ENCODE measurements at regions of chr2 and their contacts with region 1.

Region 1: GRCh38 chr2:119826370-119826961 is 66.7 kb downstream of the PTPN4 start:
- DNase-seq: peak; percentile 51
- H3K4me3 Mint-ChIP-seq: no peak overlapping the region
- H3K27ac Mint-ChIP-seq: no peak overlapping the region
- H3K4me1 Mint-ChIP-seq: peaks cover 18% of the 10 kb centered on the region
- H3K27me3 Mint-ChIP-seq: no peaks in the 10 kb centered on the region
- CTCF ChIP-seq: peak; percentile 50

Region 2: GRCh38 chr2:119753041-119753929 is 73.2 kb before region 1 on chr2:
- CTCF ChIA-PET with region 1: interaction called, 37 read pairs
- POLR2A ChIA-PET with region 1: interaction called, 8 read pairs
- intact Hi-C with region 1: loop called (anchors 1 kb)
- DNase-seq: peak; percentile 61
- H3K4me3 Mint-ChIP-seq: no peak overlapping the region
- H3K27ac Mint-ChIP-seq: no peak overlapping the region
- H3K4me1 Mint-ChIP-seq: peaks cover 56% of the 10 kb centered on the region
- H3K27me3 Mint-ChIP-seq: no peaks in the 10 kb centered on the region
- CTCF ChIP-seq: peak; percentile 47

Region 3: GRCh38 chr2:119838179-119838578 is 11.7 kb after region 1 on chr2:
- CTCF ChIA-PET with region 1: interaction called, 7 read pairs
- POLR2A ChIA-PET with region 1: interaction called, 10 read pairs
- intact Hi-C with region 1: no loop called
- DNase-seq: peak; percentile 38
- H3K4me3 Mint-ChIP-seq: peak overlapping the region; percentile 66
- H3K27ac Mint-ChIP-seq: peak overlapping the region; percentile 90
- H3K4me1 Mint-ChIP-seq: peaks cover 26% of the 10 kb centered on the region
- H3K27me3 Mint-ChIP-seq: no peaks in the 10 kb centered on the region
- CTCF ChIP-seq: no peak

Region 4: DNA sequence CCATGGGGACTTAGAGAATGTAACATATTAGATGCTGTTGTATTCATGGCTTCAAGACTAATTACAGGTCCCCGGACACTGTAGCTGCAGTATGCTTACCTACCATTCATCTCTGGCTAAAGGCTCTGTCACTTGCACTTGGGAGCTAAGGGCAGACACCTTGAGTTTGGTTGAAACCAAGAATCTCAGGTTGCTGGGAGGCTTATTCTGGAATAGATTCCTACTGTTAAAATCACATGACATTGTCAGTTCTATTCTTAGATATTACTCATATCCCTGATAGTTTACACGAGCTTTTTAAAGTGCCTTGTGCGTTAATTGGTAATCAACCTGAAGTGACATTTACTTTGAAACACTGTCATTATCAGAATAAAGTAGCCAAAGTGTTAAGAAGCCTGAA is 113.4 kb after region 1 on chr2:
- CTCF ChIA-PET with region 1: no interaction called
- POLR2A ChIA-PET with region 1: no interaction called
- intact Hi-C with region 1: no loop called
- DNase-seq: no peak
- H3K4me3 Mint-ChIP-seq: no peak overlapping the region
- H3K27ac Mint-ChIP-seq: no peak overlapping the region
- H3K4me1 Mint-ChIP-seq: no peaks in the 10 kb centered on the region
- H3K27me3 Mint-ChIP-seq: no peaks in the 10 kb centered on the region
- CTCF ChIP-seq: no peak